ENCODE measurements at regions of chr2 and their contacts with region 1.

Region 1: GRCh38 chr2:229205704-229206103 is 65.4 kb downstream of the PID1 start:
- DNase-seq: no peak
- ATAC-seq: no peak
- H3K4me3 ChIP-seq: no peak overlapping the region
- H3K27ac ChIP-seq: no peak overlapping the region
- H3K4me1 ChIP-seq: no peaks in the 10 kb centered on the region
- H3K27me3 ChIP-seq: no peaks in the 10 kb centered on the region
- CTCF ChIP-seq: no peak

Region 2: DNA sequence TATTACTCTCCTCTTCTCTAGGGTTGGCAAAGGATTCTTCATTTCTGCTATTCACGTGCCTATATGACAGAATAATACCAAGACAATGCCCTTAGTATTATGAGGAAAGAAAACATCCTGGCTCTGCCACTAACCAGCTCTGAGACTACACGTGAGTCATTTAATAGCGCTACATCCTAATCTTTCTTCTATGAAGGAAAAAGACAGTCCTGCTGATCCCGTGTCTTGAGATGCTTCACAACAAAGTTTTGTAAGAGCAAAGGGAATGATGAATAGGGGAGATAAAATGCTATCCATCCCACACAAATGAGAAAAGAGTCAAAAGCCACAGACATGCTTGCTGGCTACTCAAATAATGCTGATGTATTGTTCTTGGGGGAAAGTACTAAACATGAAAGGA is 87.4 kb before region 1 on chr2:
- intact Hi-C with region 1: no loop called
- DNase-seq: no peak
- ATAC-seq: no peak
- H3K4me3 ChIP-seq: no peak overlapping the region
- H3K27ac ChIP-seq: no peak overlapping the region
- H3K4me1 ChIP-seq: no peaks in the 10 kb centered on the region
- H3K27me3 ChIP-seq: no peaks in the 10 kb centered on the region
- CTCF ChIP-seq: no peak

Region 3: DNA sequence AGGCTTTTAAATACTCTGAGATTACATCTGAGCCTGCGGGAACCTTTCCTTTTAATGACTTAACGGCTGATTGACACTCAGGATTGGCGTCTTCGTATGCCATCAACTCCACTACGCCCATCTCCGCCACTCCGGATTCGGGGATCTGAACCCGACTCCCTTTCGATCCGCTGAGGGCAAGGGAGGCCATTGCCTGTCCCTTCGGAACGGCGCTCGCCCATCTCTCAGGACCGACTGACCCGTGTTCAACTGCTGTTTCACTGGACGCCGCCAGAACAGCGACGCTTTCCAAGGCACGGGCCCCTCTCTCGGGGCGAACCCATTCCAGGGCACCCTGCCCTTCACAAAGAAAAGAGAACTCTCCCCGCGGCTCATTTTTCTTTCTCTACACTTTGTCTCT is 25.0 kb before region 1 on chr2:
- intact Hi-C with region 1: loop called in 1 of 10 experiments (anchors 1 kb)
- DNase-seq: no peak
- ATAC-seq: no peak
- H3K4me3 ChIP-seq: no peak overlapping the region
- H3K27ac ChIP-seq: no peak overlapping the region
- H3K4me1 ChIP-seq: peaks cover 0 to 18% (median 0%) of the 10 kb centered on the region in 9 donors
- H3K27me3 ChIP-seq: no peaks in the 10 kb centered on the region
- CTCF ChIP-seq: no peak

Region 4: DNA sequence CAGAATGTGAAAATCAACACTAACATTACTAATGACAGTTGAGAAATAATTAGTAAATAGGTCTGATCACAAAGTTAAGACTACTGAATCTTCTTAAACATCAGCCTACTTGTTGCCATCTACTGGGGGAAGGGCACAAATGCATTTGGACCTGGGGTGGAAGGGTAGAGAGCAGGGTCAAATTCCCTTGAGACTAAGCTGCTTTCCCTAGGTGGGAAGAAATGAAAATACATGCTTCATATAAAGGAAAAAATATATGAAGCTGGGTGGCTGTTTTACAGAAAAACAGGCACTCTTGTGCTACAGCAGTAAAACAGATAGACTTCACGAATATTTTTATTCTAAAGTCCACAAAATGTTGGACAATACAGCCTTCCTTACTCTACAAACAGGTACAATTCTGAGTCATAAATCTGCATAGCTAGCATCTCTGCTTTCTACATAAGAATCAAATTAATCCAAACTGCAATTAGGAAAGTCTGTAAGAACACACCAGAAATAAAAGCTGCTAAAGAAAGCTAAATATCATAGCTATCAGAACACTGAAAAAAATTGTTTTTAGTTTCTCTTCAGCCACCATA is 705.2 kb after region 1 on chr2:
- intact Hi-C with region 1: no loop called
- DNase-seq: no peak
- ATAC-seq: peak in 1 of 8 donors; percentile 51
- H3K4me3 ChIP-seq: no peak overlapping the region
- H3K27ac ChIP-seq: no peak overlapping the region
- H3K4me1 ChIP-seq: peaks cover 2 to 86% (median 63%) of the 10 kb centered on the region in 9 donors
- H3K27me3 ChIP-seq: no peaks in the 10 kb centered on the region
- CTCF ChIP-seq: peak in 6 of 9 donors; percentile 9 to 50 (median 42)